Heart left ventricle (tissue), 16 donors: ENCODE measurements at regions of chr15 and their contacts with region 1.

Region 1: GRCh38 chr15:67884514-67885487 is 45.0 kb upstream of the RNU6-1 start:
- DNase-seq: peak; percentile 87 to 92 (median 90)
- ATAC-seq: peak; percentile 95 to 97 (median 96)
- H3K4me3 ChIP-seq: peak overlapping the region; percentile 22 to 66 (median 57)
- H3K27ac ChIP-seq: peak overlapping the region; percentile 64 to 86 (median 78)
- H3K4me1 ChIP-seq: peaks cover 0 to 53% (median 9%) of the 10 kb centered on the region in 12 donors
- H3K27me3 ChIP-seq: no peaks in the 10 kb centered on the region
- CTCF ChIP-seq: peak in 1 of 12 donors; percentile 10
- POLR2A ChIP-seq: peak in 1 of 2 donors; percentile 39

Region 2: GRCh38 chr15:67955252-67955651 is 70.5 kb after region 1 on chr15:
- intact Hi-C with region 1: loop called in 1 of 10 experiments (anchors 2 kb)
- DNase-seq: no peak
- ATAC-seq: peak in 1 of 4 donors; percentile 23
- H3K4me3 ChIP-seq: no peak overlapping the region
- H3K27ac ChIP-seq: peak overlapping the region in 5 of 12 donors; percentile 3 to 59 (median 32)
- H3K4me1 ChIP-seq: peaks cover 0 to 10% (median 4%) of the 10 kb centered on the region in 12 donors
- H3K27me3 ChIP-seq: no peaks in the 10 kb centered on the region
- CTCF ChIP-seq: no peak
- POLR2A ChIP-seq: no peak